ENCODE measurements at regions of chr9 and their contacts with region 1.

Region 1: DNA sequence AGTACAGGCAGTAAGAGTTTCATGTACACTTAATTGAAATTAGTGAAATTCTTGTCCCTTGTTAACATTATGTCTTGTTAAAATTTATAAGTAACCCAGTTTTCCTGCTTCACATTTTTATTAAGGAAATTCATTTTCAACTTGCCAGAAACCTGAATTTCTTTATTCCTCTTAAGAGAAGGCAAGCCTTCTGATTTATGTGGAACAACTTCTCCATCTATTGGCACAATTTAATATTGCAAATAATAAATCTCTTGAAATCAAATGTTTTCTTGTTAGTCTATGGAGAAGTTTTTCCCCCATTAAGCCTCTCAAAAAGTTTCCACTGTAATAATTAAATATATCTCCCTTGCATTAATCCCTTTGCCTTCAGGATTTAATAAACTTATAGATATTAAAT is 33.8 kb upstream of the ACO1 start:
- DNase-seq: peak; percentile 20
- ATAC-seq: no peak
- H3K4me3 ChIP-seq: no peak overlapping the region
- H3K27ac ChIP-seq: no peak overlapping the region
- H3K4me1 ChIP-seq: no peaks in the 10 kb centered on the region
- H3K27me3 ChIP-seq: no peaks in the 10 kb centered on the region; a peak in 1 of 5 replicates
- CTCF ChIP-seq: 0 out of 2 replicates have a peak, but pooled peaks have one; percentile 23
- EP300 ChIP-seq: no peak
- POLR2A ChIP-seq: no peak
- RAD21 ChIP-seq: no peak

Region 2: DNA sequence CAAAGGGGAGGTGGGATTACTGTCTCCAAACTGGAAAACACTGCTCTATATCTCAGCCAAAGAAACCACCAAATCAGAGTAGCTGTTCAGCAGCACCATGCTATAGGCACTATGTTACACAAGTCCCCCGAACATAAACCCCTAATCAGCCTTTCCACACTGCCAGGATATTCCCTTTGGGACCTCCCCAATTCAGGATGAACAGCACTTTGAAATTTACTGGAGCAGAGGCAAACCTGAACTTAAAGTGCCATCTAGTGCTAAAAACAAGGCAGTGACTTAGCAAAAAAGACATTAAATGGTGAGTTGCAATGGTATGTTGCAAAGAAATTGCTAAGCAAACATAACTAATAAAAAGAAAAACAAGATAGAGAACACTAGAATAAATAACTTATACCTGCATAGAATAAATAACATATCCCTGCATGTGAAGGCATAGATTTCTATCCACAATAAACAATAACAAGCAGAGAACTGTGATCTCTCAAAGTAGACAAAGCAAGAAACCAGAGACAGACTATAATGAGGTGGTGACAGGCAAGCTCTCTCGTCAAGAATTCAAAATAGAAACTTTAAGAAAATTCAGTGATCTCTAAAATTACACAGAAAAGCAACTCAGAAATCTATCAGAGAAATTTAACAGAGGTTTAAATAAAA is 550.6 kb before region 1 on chr9:
- CTCF ChIA-PET with region 1: no interaction called
- POLR2A ChIA-PET with region 1: no interaction called
- in situ Hi-C with region 1: no loop called
- intact Hi-C with region 1: loop called (anchors 10 kb)
- DNase-seq: peak; percentile 24
- ATAC-seq: peak; percentile 71
- H3K4me3 ChIP-seq: no peak overlapping the region
- H3K27ac ChIP-seq: no peak overlapping the region
- H3K4me1 ChIP-seq: no peaks in the 10 kb centered on the region
- H3K27me3 ChIP-seq: no peaks in the 10 kb centered on the region
- CTCF ChIP-seq: peak; percentile 77
- EP300 ChIP-seq: no peak
- POLR2A ChIP-seq: no peak
- RAD21 ChIP-seq: peak; percentile 66

Region 3: GRCh38 chr9:31848505-31849285 is 502.0 kb before region 1 on chr9:
- CTCF ChIA-PET with region 1: no interaction called
- POLR2A ChIA-PET with region 1: no interaction called
- in situ Hi-C with region 1: no loop called
- intact Hi-C with region 1: loop called (anchors 10 kb)
- DNase-seq: peak; percentile 72
- ATAC-seq: peak; percentile 100
- H3K4me3 ChIP-seq: peak overlapping the region; percentile 72 to 83 (median 78)
- H3K27ac ChIP-seq: peak overlapping the region; percentile 77
- H3K4me1 ChIP-seq: peaks cover 20% of the 10 kb centered on the region
- H3K27me3 ChIP-seq: no peaks in the 10 kb centered on the region; a peak in 1 of 5 replicates
- CTCF ChIP-seq: no peak
- EP300 ChIP-seq: no peak
- POLR2A ChIP-seq: peak; percentile 83 to 90
- RAD21 ChIP-seq: no peak

Region 4: GRCh38 chr9:32258482-32258881 is 92.2 kb before region 1 on chr9:
- CTCF ChIA-PET with region 1: no interaction called
- POLR2A ChIA-PET with region 1: no interaction called
- in situ Hi-C with region 1: no loop called
- intact Hi-C with region 1: loop called (anchors 5 kb)
- DNase-seq: no peak
- ATAC-seq: no peak
- H3K4me3 ChIP-seq: no peak overlapping the region
- H3K27ac ChIP-seq: no peak overlapping the region
- H3K4me1 ChIP-seq: peaks cover 20% of the 10 kb centered on the region
- H3K27me3 ChIP-seq: no peaks in the 10 kb centered on the region
- CTCF ChIP-seq: no peak
- EP300 ChIP-seq: no peak
- POLR2A ChIP-seq: no peak
- RAD21 ChIP-seq: no peak